ENCODE measurements at regions of chr14 and their contacts with region 1.

Region 1: GRCh38 chr14:49173765-49174373 is 412.3 kb downstream of the RPS29 start:
- DNase-seq: peak; percentile 88
- ATAC-seq: peak; percentile 100
- H3K4me3 ChIP-seq: no peak overlapping the region
- H3K27ac ChIP-seq: no peak overlapping the region
- H3K4me1 ChIP-seq: no peaks in the 10 kb centered on the region
- H3K27me3 ChIP-seq: peaks cover 1% of the 10 kb centered on the region; the same call in 1 of the 2 replicates
- CTCF ChIP-seq: peak; percentile 88

Region 2: GRCh38 chr14:47675466-47676314 is 1498.2 kb before region 1 on chr14 and contains the start of gene MDGA2:
- CTCF ChIA-PET with region 1: no interaction called
- POLR2A ChIA-PET with region 1: no interaction called
- intact Hi-C with region 1: loop called (anchors 5 kb)
- DNase-seq: no peak
- ATAC-seq: no peak
- H3K4me3 ChIP-seq: no peak within 1 kb of the TSS
- H3K27ac ChIP-seq: no peak within 1 kb of the TSS
- H3K4me1 ChIP-seq: no peaks in the 10 kb centered on the region
- H3K27me3 ChIP-seq: peaks cover 26% of the 10 kb centered on the region
- CTCF ChIP-seq: no peak
- total RNA-seq, gene MDGA2: 0.04 and 0.17 TPM in 2 replicates

Region 3: GRCh38 chr14:49134940-49135339 is 38.9 kb before region 1 on chr14:
- CTCF ChIA-PET with region 1: no interaction called
- POLR2A ChIA-PET with region 1: no interaction called
- intact Hi-C with region 1: no loop called
- DNase-seq: peak; percentile 15
- ATAC-seq: no peak
- H3K4me3 ChIP-seq: no peak overlapping the region
- H3K27ac ChIP-seq: no peak overlapping the region
- H3K4me1 ChIP-seq: no peaks in the 10 kb centered on the region
- H3K27me3 ChIP-seq: no peaks in the 10 kb centered on the region
- CTCF ChIP-seq: no peak; the same call in 1 of the 2 replicates

Region 4: DNA sequence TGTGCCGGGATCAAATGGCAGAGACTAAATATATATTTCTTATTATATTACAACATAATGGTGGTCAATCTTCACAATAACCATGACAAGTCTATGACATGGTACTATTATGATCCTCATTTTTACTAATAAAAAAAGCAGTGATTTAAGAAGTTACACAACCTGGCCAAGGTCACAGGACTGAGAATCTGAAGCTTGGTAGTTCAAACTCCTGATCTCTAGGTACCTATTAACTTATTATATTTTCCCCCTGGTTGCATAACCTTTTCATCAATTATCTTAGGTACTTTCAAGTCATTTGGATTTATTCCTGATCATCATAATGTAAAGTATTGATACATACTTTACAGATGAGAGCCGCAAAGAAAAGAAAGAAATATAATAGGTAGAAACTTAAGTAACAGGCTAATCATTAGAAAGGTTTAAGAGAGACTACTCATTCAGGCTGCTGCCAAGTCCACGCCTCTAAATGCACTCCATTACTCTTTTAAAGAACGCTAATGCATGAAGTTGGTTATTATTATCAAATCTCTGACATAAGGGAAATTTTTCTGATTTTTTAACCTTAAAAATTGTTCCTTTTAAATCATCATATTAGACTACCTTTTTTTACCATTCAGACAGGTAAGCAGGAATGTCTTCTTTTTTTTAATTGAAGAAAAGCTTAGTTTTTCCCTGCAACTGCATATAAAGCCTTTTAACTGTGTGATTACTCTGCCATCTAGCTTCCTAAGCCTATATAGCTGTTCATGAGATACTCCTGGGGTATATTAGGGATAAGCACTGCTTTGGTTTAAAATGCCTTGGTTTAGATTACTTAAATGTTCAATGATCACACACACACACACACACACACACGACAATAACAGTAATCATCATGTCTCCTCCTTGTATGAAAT is 376.7 kb after region 1 on chr14:
- CTCF ChIA-PET with region 1: interaction called, 13 read pairs
- POLR2A ChIA-PET with region 1: no interaction called
- intact Hi-C with region 1: no loop called
- DNase-seq: peak; percentile 73
- ATAC-seq: peak; percentile 75
- H3K4me3 ChIP-seq: no peak overlapping the region
- H3K27ac ChIP-seq: no peak overlapping the region
- H3K4me1 ChIP-seq: peaks cover 10% of the 10 kb centered on the region
- H3K27me3 ChIP-seq: no peaks in the 10 kb centered on the region
- CTCF ChIP-seq: peak; percentile 88